Ascending aorta (tissue), 2 donors: ENCODE measurements at regions of chr9 and their contacts with region 1.

Region 1: GRCh38 chr9:96555567-96556386 is 63.9 kb downstream of the CDC14B start:
- DNase-seq: no peak
- H3K4me3 ChIP-seq: peak overlapping the region in 1 of 2 donors; percentile 35
- H3K27ac ChIP-seq: peak overlapping the region; percentile 92 to 96
- H3K4me1 ChIP-seq: peaks cover 10 to 57% of the 10 kb centered on the region in 2 donors
- H3K27me3 ChIP-seq: no peaks in the 10 kb centered on the region
- CTCF ChIP-seq: no peak

Region 2: DNA sequence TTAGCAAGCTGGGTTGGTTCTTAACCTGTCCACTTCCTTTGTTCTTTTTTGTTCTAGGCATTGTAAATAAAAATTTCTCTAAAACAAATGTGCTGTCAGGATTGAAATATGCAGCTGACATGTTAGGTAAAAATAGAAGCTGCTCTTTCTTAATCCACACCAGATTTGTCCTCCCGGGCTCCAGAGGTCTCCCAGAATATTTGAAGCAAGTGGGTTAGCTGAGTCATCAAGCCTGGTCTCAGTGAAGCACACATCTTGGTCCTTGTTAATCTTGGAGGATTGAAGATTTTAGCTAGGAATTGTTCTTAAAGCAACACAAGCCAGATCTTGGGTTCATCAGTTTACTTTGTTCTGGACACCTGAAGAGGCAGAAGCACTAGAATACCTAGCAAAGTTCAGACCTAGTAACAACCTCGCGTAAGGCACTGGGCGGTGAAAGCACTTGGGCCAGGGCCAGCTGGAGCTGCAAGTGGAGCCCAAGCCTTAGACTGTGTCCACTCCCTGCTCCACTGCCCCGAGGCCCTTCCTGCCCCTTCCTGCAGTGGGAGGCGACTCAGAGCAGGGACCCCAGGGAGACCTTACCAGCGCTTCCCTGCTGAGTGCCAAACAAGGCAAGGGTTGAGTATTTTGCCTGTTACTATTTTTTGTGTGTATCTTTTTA is 69.3 kb before region 1 on chr9:
- intact Hi-C with region 1: loop called (anchors 2 kb)
- DNase-seq: peak in 1 of 2 donors; percentile 88
- H3K4me3 ChIP-seq: peak overlapping the region in 1 of 2 donors; percentile 12
- H3K27ac ChIP-seq: peak overlapping the region; percentile 92 to 93
- H3K4me1 ChIP-seq: peaks cover 19 to 57% of the 10 kb centered on the region in 2 donors
- H3K27me3 ChIP-seq: no peaks in the 10 kb centered on the region
- CTCF ChIP-seq: no peak